HepG2 (cell line): ENCODE measurements at regions of chr3 and their contacts with region 1.

Region 1: GRCh38 chr3:47522082-47522987 is 8.8 kb upstream of the ELP6 start:
- DNase-seq: peak; percentile 83
- ATAC-seq: peak; percentile 93
- H3K4me3 ChIP-seq: 0 out of 6 replicates have a peak overlapping the region, but pooled peaks of 1 of the 3 experiments have one; percentile 26
- H3K27ac ChIP-seq: no peak overlapping the region
- H3K4me1 ChIP-seq: peaks cover 34% of the 10 kb centered on the region
- H3K27me3 ChIP-seq: no peaks in the 10 kb centered on the region
- CTCF ChIP-seq: peak; percentile 96
- EP300 ChIP-seq: no peak
- POLR2A ChIP-seq: no peak
- RAD21 ChIP-seq: peak; percentile 96

Region 2: GRCh38 chr3:47324278-47324865 is 198.0 kb before region 1 on chr3:
- CTCF ChIA-PET with region 1: no interaction called
- POLR2A ChIA-PET with region 1: no interaction called
- in situ Hi-C with region 1: no loop called
- intact Hi-C with region 1: no loop called
- DNase-seq: peak; percentile 63
- ATAC-seq: peak; percentile 95
- H3K4me3 ChIP-seq: no peak overlapping the region
- H3K27ac ChIP-seq: no peak overlapping the region
- H3K4me1 ChIP-seq: no peaks in the 10 kb centered on the region
- H3K27me3 ChIP-seq: no peaks in the 10 kb centered on the region
- CTCF ChIP-seq: peak; percentile 82
- EP300 ChIP-seq: no peak
- POLR2A ChIP-seq: no peak
- RAD21 ChIP-seq: peak; percentile 73

Region 3: DNA sequence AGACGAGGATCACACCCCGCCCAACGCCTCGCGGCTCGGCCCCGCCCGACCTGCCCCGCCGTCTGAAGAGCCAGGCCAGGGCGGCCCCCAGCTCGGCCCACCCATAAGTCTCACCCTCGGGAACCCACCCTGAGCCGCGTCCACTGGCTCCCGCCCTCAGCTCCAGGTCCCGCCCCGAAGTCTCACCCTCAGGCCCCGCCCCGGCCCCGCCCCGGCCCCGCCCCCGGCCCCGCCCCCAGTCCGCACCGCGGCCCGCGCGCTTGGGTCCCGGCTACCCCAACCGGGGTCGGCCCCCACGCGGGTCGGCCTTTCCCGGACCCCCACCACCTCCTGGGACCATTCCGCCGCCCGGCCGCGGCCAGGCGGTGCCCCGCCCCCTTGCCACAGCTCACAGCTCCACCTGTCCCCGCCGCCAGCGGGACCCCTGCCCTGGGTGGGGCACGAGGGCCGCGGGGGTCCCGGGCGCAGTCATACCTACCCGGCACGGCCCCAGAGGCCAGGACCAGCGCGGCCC is 55.8 kb after region 1 on chr3:
- CTCF ChIA-PET with region 1: no interaction called
- POLR2A ChIA-PET with region 1: no interaction called
- in situ Hi-C with region 1: no loop called
- intact Hi-C with region 1: loop called (anchors 2 kb)
- DNase-seq: no peak
- ATAC-seq: peak; percentile 44
- H3K4me3 ChIP-seq: peak overlapping the region; percentile 47 to 71 (median 54); a peak in 4 of 6 replicates
- H3K27ac ChIP-seq: no peak overlapping the region
- H3K4me1 ChIP-seq: peaks cover 20% of the 10 kb centered on the region
- H3K27me3 ChIP-seq: peaks cover 7 to 50% of the 10 kb centered on the region in 2 experiments
- CTCF ChIP-seq: no peak
- EP300 ChIP-seq: no peak
- POLR2A ChIP-seq: no peak
- RAD21 ChIP-seq: no peak

Region 4: DNA sequence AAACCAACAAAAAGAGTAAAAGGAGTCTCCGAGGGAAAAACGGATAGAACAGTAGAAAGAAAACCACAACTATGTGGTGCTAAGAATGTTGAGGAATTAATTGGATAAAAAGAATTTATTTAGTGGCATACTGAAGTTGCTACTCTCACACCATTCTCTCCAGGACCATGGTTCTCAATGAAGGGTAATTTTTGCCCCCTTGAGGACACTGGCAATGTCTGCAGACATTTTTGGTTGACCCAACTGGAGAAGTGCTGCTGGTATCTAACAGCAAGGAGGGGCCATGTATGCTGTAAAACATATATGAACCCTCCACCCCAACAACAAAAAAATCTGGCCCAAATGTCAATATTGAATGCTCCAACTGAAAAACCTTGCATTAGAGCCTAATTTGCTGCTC is 142.2 kb after region 1 on chr3:
- CTCF ChIA-PET with region 1: interaction called, 4 read pairs
- POLR2A ChIA-PET with region 1: no interaction called
- in situ Hi-C with region 1: no loop called
- intact Hi-C with region 1: loop called (anchors 1 kb)
- DNase-seq: peak; percentile 14
- ATAC-seq: peak; percentile 79
- H3K4me3 ChIP-seq: no peak overlapping the region
- H3K27ac ChIP-seq: no peak overlapping the region
- H3K4me1 ChIP-seq: no peaks in the 10 kb centered on the region
- H3K27me3 ChIP-seq: no peaks in the 10 kb centered on the region
- CTCF ChIP-seq: no peak
- EP300 ChIP-seq: no peak
- POLR2A ChIP-seq: no peak
- RAD21 ChIP-seq: no peak

Region 5: DNA sequence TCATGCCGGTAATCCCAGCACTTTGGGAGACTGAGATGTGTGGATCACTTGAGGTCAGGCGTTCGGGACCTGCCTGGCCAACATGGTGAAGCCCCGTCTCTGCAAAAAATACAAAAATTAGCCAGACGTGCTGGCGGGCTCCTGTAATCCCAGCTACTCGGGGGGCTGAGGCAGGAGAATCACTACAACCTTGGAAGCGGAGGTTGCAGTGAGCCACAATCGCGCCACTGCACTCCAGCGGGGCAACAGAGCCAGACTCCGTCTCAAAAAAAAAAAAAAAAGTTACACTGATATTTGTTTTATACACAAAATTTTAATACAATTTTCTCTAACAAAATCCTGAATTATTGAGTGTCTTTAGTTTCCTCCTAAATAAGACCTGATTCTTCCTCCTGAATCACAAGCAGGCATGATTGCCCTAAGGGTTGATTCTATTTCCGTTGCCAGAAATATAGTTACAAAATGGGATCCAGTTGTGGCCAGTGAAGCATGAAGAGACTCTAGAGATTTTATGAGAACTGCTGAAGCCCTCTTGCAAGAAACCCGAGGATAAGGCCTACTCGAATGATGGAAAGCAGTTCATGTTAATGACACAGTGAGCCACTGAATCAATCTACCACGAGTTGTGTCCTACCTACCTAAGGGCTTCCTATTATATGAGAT is 269.0 kb after region 1 on chr3:
- CTCF ChIA-PET with region 1: interaction called, 11 read pairs
- POLR2A ChIA-PET with region 1: interaction called, 5 read pairs
- in situ Hi-C with region 1: loop called (anchors 5 kb)
- intact Hi-C with region 1: loop called (anchors 1 kb)
- DNase-seq: no peak
- ATAC-seq: no peak
- H3K4me3 ChIP-seq: no peak overlapping the region
- H3K27ac ChIP-seq: no peak overlapping the region
- H3K4me1 ChIP-seq: peaks cover 21% of the 10 kb centered on the region
- H3K27me3 ChIP-seq: no peaks in the 10 kb centered on the region
- CTCF ChIP-seq: no peak
- EP300 ChIP-seq: no peak
- POLR2A ChIP-seq: no peak
- RAD21 ChIP-seq: no peak